ENCODE measurements at regions of chr14 and their contacts with region 1.

Region 1: GRCh38 chr14:67111022-67111421 is 78.2 kb upstream of the GARIN2 start:
- DNase-seq: no peak
- ATAC-seq: no peak
- H3K4me3 ChIP-seq: no peak overlapping the region
- H3K27ac ChIP-seq: no peak overlapping the region
- H3K4me1 ChIP-seq: no peaks in the 10 kb centered on the region
- H3K27me3 ChIP-seq: no peaks in the 10 kb centered on the region
- CTCF ChIP-seq: no peak
- POLR2A ChIP-seq: no peak
- RAD21 ChIP-seq: no peak

Region 2: GRCh38 chr14:66403183-66403582 is 707.8 kb before region 1 on chr14:
- CTCF ChIA-PET with region 1: no interaction called
- POLR2A ChIA-PET with region 1: no interaction called
- RAD21 ChIA-PET with region 1: no interaction called
- intact Hi-C with region 1: loop called (anchors 5 kb)
- DNase-seq: no peak
- ATAC-seq: peak; percentile 78
- H3K4me3 ChIP-seq: no peak overlapping the region
- H3K27ac ChIP-seq: no peak overlapping the region
- H3K4me1 ChIP-seq: no peaks in the 10 kb centered on the region
- H3K27me3 ChIP-seq: no peaks in the 10 kb centered on the region
- CTCF ChIP-seq: peak; percentile 41 to 52 (median 52); a peak in 4 of 6 replicates
- POLR2A ChIP-seq: no peak
- RAD21 ChIP-seq: peak; percentile 50

Region 3: GRCh38 chr14:66495218-66496098 is 615.6 kb before region 1 on chr14:
- CTCF ChIA-PET with region 1: no interaction called
- POLR2A ChIA-PET with region 1: no interaction called
- RAD21 ChIA-PET with region 1: no interaction called
- intact Hi-C with region 1: loop called (anchors 5 kb)
- DNase-seq: peak; percentile 39
- ATAC-seq: peak; percentile 98
- H3K4me3 ChIP-seq: no peak overlapping the region
- H3K27ac ChIP-seq: no peak overlapping the region
- H3K4me1 ChIP-seq: no peaks in the 10 kb centered on the region
- H3K27me3 ChIP-seq: no peaks in the 10 kb centered on the region
- CTCF ChIP-seq: peak; percentile 54 to 80 (median 68); a peak in 5 of 6 replicates
- POLR2A ChIP-seq: no peak
- RAD21 ChIP-seq: peak; percentile 71

Region 4: GRCh38 chr14:67199016-67199415 is 88.0 kb after region 1 on chr14:
- CTCF ChIA-PET with region 1: no interaction called
- POLR2A ChIA-PET with region 1: no interaction called
- RAD21 ChIA-PET with region 1: no interaction called
- intact Hi-C with region 1: no loop called
- DNase-seq: no peak
- ATAC-seq: no peak
- H3K4me3 ChIP-seq: no peak overlapping the region
- H3K27ac ChIP-seq: no peak overlapping the region
- H3K4me1 ChIP-seq: no peaks in the 10 kb centered on the region
- H3K27me3 ChIP-seq: no peaks in the 10 kb centered on the region
- CTCF ChIP-seq: no peak
- POLR2A ChIP-seq: no peak
- RAD21 ChIP-seq: no peak